Activated B cell treated with CpG ODN at 0.5 μM for 24 hours (primary cell): ENCODE measurements at regions of chr11 and their contacts with region 1.

Region 1: DNA sequence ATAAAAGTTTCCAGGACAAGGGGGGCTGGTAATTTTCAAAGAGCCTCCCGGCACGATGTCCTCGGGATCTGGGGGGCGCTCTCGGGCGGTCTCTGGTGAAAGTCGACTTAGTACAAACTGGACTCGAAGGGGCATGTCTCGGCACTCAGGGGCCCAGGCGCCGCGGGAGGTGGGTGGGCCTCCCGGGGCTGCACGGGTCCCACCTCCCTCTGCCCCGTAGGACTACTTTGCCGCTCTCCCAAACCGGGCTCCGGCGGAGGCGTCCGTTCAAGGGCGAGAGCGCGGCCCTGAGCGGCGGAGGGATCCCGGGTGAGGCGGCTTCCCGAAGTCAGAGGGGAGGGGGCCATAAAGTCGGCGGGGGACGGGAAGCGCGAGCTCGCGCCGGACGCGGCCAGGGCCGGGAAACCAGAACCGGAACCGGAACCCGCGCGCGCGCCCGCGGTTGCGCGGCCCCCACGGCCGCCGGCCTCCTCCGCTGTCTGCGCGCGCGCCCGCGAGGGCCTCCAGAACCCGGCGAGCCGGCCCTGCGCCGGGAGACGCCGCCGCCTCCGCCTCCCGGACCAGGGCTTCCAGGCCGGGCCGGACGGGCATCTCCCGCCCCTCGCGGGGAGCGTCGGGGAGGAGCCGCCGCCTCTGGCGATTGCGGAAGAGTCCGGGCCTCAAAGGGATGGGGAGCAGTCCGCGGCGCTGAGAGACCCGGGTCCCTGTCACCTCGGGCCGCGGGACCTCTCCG is at the start of gene ARHGEF12:
- DNase-seq: peak; percentile 81
- ATAC-seq: peak; percentile 68
- H3K4me3 Mint-ChIP-seq: peak within 1 kb of the TSS; percentile 91
- H3K27ac Mint-ChIP-seq: peak within 1 kb of the TSS; percentile 74
- H3K4me1 Mint-ChIP-seq: peaks cover 31% of the 10 kb centered on the region
- H3K27me3 Mint-ChIP-seq: peaks cover 35% of the 10 kb centered on the region
- CTCF ChIP-seq: no peak
- total RNA-seq, gene ARHGEF12: 20.9 and 25.8 TPM in 2 replicates

Region 2: GRCh38 chr11:120511116-120511819 is 175.2 kb after region 1 on chr11 and contains the start of gene GRIK4:
- CTCF ChIA-PET with region 1: interaction called, 7 read pairs
- POLR2A ChIA-PET with region 1: no interaction called
- intact Hi-C with region 1: loop called (anchors 1 kb)
- DNase-seq: peak; percentile 81
- ATAC-seq: peak; percentile 94
- H3K4me3 Mint-ChIP-seq: peak within 1 kb of the TSS; percentile 58
- H3K27ac Mint-ChIP-seq: no peak within 1 kb of the TSS
- H3K4me1 Mint-ChIP-seq: peaks cover 3% of the 10 kb centered on the region
- H3K27me3 Mint-ChIP-seq: peaks cover 51% of the 10 kb centered on the region
- CTCF ChIP-seq: peak; percentile 20
- total RNA-seq, gene GRIK4: 0.05 TPM in 1 of 2 replicates, not detected in the other

Region 3: GRCh38 chr11:120801801-120802689 is 466.0 kb after region 1 on chr11:
- CTCF ChIA-PET with region 1: no interaction called
- POLR2A ChIA-PET with region 1: no interaction called
- intact Hi-C with region 1: loop called (anchors 1 kb)
- DNase-seq: peak; percentile 34
- ATAC-seq: peak; percentile 45
- H3K4me3 Mint-ChIP-seq: no peak overlapping the region
- H3K27ac Mint-ChIP-seq: no peak overlapping the region
- H3K4me1 Mint-ChIP-seq: no peaks in the 10 kb centered on the region
- H3K27me3 Mint-ChIP-seq: peaks cover 19% of the 10 kb centered on the region
- CTCF ChIP-seq: peak; percentile 23

Region 4: GRCh38 chr11:120952461-120953434 is 616.7 kb after region 1 on chr11:
- CTCF ChIA-PET with region 1: no interaction called
- POLR2A ChIA-PET with region 1: no interaction called
- intact Hi-C with region 1: loop called (anchors 2 kb)
- DNase-seq: peak; percentile 26
- ATAC-seq: peak; percentile 75
- H3K4me3 Mint-ChIP-seq: peak overlapping the region; percentile 45
- H3K27ac Mint-ChIP-seq: no peak overlapping the region
- H3K4me1 Mint-ChIP-seq: peaks cover 12% of the 10 kb centered on the region
- H3K27me3 Mint-ChIP-seq: peaks cover 26% of the 10 kb centered on the region
- CTCF ChIP-seq: no peak

Region 5: GRCh38 chr11:121194731-121195596 is 858.9 kb after region 1 on chr11:
- CTCF ChIA-PET with region 1: interaction called, 6 read pairs
- POLR2A ChIA-PET with region 1: no interaction called
- intact Hi-C with region 1: loop called (anchors 1 kb)
- DNase-seq: no peak
- ATAC-seq: peak; percentile 52
- H3K4me3 Mint-ChIP-seq: no peak overlapping the region
- H3K27ac Mint-ChIP-seq: no peak overlapping the region
- H3K4me1 Mint-ChIP-seq: peaks cover 6% of the 10 kb centered on the region
- H3K27me3 Mint-ChIP-seq: peaks cover 25% of the 10 kb centered on the region
- CTCF ChIP-seq: no peak